A549 (cell line): ENCODE measurements at regions of chr15 and their contacts with region 1.

Region 1: DNA sequence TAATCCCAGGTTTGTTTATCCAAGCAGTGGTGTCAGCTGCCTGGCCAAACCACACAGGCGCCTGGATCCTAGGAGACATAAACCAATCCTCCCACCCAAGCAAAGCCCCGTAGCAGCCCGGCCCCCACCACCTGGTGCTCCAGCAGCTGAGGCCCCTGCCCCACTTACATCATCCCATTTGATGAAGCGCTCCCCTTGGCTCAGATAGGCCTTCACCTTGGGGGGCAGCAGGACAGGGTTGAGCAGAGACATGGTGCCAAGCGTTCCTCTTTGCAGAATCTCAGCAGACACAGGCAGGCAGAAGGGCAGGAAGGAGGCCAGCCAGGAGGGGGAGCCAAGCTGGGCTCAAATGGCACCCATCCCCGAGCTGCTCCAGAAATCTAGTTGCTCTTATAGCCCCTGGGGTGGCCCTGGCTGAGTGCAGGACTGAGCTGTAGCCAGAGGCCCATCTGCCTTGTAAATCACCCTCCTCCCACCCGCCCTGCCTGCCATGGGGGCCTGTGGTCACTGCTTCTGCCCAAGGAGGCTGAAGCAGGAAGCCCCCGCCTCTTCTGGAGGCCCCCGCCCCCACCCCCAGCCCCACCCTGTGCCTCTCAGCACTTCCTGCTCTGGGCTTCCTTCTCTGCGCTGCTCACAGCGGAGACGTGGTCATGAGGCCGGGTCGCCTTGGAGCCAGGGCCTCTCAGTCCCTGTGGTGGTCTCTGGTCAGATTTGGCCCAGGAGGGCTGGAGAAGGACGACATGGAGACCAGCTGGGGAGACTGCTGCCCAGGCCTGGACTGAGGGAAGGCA is at the start of gene PLCB2:
- DNase-seq: peak in 1 of 2 experiments; percentile 23
- ATAC-seq: peak; percentile 42 to 70; a peak in 4 of 6 replicates
- H3K4me3 ChIP-seq: no peak within 1 kb of the TSS
- H3K27ac ChIP-seq: no peak within 1 kb of the TSS
- H3K4me1 ChIP-seq: no peaks in the 10 kb centered on the region
- CTCF ChIP-seq: no peak
- EP300 ChIP-seq: no peak
- POLR2A ChIP-seq: no peak
- RAD21 ChIP-seq: no peak
- polyA plus RNA-seq, gene PLCB2: 0.19 and 0.30 TPM in 2 replicates

Region 2: GRCh38 chr15:40002295-40002694 is 305.3 kb before region 1 on chr15:
- CTCF ChIA-PET with region 1: no interaction called
- POLR2A ChIA-PET with region 1: no interaction called
- DNase-seq: peak; percentile 29 to 72
- ATAC-seq: peak in 1 of 2 experiments; percentile 84; a peak in 4 of 6 replicates
- H3K4me3 ChIP-seq: no peak overlapping the region
- H3K27ac ChIP-seq: peak overlapping the region; percentile 56 to 72
- H3K4me1 ChIP-seq: peaks cover 31% of the 10 kb centered on the region
- CTCF ChIP-seq: no peak
- EP300 ChIP-seq: no peak
- POLR2A ChIP-seq: no peak
- RAD21 ChIP-seq: no peak

Region 3: GRCh38 chr15:40282144-40282868 is 25.3 kb before region 1 on chr15:
- CTCF ChIA-PET with region 1: interaction called, 203 read pairs
- POLR2A ChIA-PET with region 1: no interaction called
- DNase-seq: peak; percentile 63 to 64
- ATAC-seq: peak; percentile 63 to 81
- H3K4me3 ChIP-seq: peak overlapping the region; percentile 65
- H3K27ac ChIP-seq: peak overlapping the region; percentile 72 to 86
- H3K4me1 ChIP-seq: peaks cover 5% of the 10 kb centered on the region; the same call in 1 of the 3 replicates
- CTCF ChIP-seq: peak; percentile 62
- EP300 ChIP-seq: no peak
- POLR2A ChIP-seq: peak; percentile 17
- RAD21 ChIP-seq: no peak

Region 4: GRCh38 chr15:40290918-40291574 is 16.6 kb before region 1 on chr15:
- CTCF ChIA-PET with region 1: interaction called, 55 read pairs
- POLR2A ChIA-PET with region 1: no interaction called
- DNase-seq: peak; percentile 31 to 38
- ATAC-seq: peak; percentile 67 to 82
- H3K4me3 ChIP-seq: peak overlapping the region; percentile 34
- H3K27ac ChIP-seq: peak overlapping the region; percentile 61 to 87; a peak in 5 of 6 replicates
- H3K4me1 ChIP-seq: peaks cover 11% of the 10 kb centered on the region; the same call in 2 of the 3 replicates
- CTCF ChIP-seq: no peak
- EP300 ChIP-seq: no peak
- POLR2A ChIP-seq: no peak
- RAD21 ChIP-seq: no peak

Region 5: DNA sequence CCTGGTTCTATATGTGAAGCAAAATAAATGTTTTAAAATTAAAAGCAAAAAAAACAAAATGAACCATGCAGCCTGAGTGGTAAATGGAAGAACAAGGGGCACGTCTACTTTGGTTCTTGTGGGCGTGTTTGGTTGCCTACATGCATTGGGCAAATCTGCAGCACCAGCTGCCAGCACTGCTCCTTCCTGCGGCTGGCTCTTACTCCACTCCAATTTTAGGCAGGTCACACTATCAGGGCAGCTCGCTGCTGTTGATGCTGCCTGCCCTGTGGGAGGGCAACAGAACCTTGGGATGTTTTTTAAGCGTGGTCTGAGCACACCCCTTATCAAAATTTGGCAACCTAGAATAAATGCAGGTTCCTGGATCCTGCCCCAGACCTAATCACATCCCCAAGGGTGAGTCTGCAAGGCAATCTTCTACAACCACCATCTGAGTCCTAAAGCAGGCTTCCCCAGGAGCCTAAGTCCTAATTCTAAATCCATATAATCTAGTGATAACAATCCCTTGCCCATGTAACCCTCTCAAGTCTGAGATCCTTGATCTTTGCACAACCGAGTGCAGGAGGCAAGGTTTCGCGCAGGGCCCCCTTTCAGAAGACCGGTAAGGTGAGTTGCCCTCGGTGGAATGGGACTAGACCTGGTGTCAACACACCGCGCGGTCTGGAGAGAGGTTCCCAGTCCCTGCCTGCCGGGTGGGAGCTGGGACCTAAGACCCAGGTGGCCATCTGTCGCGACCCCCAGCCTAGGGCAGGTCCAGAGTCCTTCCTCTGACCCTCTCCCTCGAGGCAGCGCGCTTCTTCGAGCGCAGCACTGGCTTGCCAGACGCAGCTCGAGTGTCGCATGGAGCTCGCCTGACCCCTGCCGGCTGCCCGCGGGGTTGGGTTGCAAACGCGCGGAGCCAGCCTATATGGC is 113.9 kb after region 1 on chr15:
- CTCF ChIA-PET with region 1: interaction called, 24 read pairs
- POLR2A ChIA-PET with region 1: no interaction called
- DNase-seq: peak; percentile 55 to 63
- ATAC-seq: peak; percentile 97
- H3K4me3 ChIP-seq: no peak overlapping the region
- H3K27ac ChIP-seq: no peak overlapping the region
- H3K4me1 ChIP-seq: peaks cover 4% of the 10 kb centered on the region; the same call in 2 of the 3 replicates
- CTCF ChIP-seq: peak; percentile 68
- EP300 ChIP-seq: no peak
- POLR2A ChIP-seq: no peak
- RAD21 ChIP-seq: peak; percentile 81 to 85

Region 6: GRCh38 chr15:40506964-40507571 is 199.5 kb after region 1 on chr15:
- CTCF ChIA-PET with region 1: no interaction called
- POLR2A ChIA-PET with region 1: no interaction called
- DNase-seq: peak; percentile 71 to 79
- ATAC-seq: peak; percentile 97 to 98
- H3K4me3 ChIP-seq: peak overlapping the region; percentile 14; the same call in 1 of the 3 replicates
- H3K27ac ChIP-seq: peak overlapping the region; percentile 55 to 86; a peak in 5 of 6 replicates
- H3K4me1 ChIP-seq: peaks cover 7% of the 10 kb centered on the region; the same call in 2 of the 3 replicates
- CTCF ChIP-seq: peak; percentile 54
- EP300 ChIP-seq: no peak
- POLR2A ChIP-seq: no peak
- RAD21 ChIP-seq: peak; percentile 53 to 58